PC-3 (cell line): ENCODE measurements at regions of chr13 and their contacts with region 1.

Region 1: DNA sequence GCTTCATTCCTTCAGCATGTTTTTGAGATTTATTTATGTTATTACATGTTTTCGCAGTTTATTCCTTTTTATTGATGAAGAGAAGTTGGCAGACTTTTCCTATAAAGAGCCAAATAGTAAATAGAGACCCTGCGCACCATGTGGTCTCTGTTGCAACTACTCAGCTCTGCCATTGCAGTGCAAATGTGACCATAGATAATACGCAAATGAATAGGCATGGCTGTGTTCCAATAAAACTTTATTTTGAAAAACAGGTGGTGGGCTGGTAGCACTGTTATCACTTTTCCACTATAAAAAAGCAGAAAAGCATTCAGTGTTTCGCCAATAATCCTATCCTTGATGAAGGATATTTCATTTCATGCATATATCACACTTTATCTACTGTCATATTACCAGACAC is 95.0 kb downstream of the DNAJC3 start:
- DNase-seq: no peak
- ATAC-seq: no peak
- H3K4me3 ChIP-seq: no peak overlapping the region
- H3K27ac ChIP-seq: no peak overlapping the region
- H3K4me1 ChIP-seq: no peaks in the 10 kb centered on the region; the same call in 1 of the 2 replicates
- H3K27me3 ChIP-seq: no peaks in the 10 kb centered on the region
- CTCF ChIP-seq: no peak

Region 2: DNA sequence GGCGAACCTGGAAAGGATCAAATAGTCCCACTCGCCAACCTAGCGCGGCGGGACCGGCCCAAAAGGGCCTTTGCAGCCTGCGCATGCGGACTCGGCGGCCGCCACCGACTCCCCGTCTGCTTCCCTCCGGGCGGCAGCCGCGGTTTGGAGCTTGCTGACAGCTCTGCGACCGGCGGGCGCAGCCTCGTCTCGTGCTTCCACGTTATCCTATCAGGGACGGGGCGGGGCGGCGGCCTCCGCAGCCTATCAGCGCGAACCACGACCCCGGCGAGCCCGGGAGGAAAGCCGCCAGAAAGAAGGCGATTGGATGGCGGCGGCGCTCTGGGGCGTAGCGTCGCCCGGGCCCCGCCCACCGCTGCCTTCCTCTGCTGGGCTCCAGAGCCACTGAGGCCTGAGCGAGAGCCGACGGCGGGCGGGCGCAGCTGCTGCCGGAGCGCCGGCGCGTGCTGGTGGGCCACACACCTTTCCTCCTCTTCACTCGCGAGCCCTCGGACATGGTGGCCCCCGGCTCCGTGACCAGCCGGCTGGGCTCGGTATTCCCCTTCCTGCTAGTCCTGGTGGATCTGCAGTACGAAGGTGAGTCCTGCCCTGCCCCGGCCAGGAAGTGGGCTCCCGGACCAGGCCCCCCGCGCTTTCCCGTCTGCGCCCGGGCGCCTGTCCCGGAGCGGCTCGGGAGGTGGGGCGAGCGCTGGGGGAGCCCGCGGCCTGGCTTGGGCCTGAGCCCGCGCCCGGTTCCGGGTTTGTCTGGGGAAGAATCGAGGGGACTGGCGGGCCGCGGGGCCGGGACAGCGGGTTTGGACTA is 94.9 kb before region 1 on chr13 and contains the start of gene DNAJC3:
- CTCF ChIA-PET with region 1: no interaction called
- POLR2A ChIA-PET with region 1: no interaction called
- intact Hi-C with region 1: loop called (anchors 10 kb)
- DNase-seq: peak; percentile 94
- ATAC-seq: peak; percentile 93
- H3K4me3 ChIP-seq: peak within 1 kb of the TSS; percentile 98
- H3K27ac ChIP-seq: peak within 1 kb of the TSS; percentile 71
- H3K4me1 ChIP-seq: peaks cover 35% of the 10 kb centered on the region
- H3K27me3 ChIP-seq: no peaks in the 10 kb centered on the region
- CTCF ChIP-seq: no peak
- total RNA-seq, gene DNAJC3: 17.8 and 20.5 TPM in 2 replicates

Region 3: DNA sequence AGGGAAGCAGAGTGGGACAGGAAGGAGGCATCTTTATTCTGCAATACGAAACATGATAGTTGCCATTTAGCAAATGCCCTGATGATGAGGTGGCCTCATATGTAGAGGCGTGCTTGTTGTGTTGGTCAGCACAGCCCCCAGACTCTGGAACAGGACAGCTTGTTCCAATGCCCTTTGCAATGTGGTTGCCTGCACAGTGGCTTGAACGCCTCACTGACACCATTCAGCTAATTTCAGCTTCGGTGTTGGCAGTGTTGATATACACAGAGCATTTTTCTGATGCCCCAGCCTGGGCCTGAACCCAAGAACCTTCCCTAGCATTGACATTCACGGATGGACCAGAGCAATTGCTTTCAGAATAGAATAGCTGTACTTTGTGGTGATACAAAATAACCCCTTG is 451.3 kb after region 1 on chr13:
- CTCF ChIA-PET with region 1: no interaction called
- POLR2A ChIA-PET with region 1: no interaction called
- intact Hi-C with region 1: no loop called
- DNase-seq: no peak
- ATAC-seq: no peak
- H3K4me3 ChIP-seq: no peak overlapping the region
- H3K27ac ChIP-seq: no peak overlapping the region
- H3K4me1 ChIP-seq: no peaks in the 10 kb centered on the region
- H3K27me3 ChIP-seq: no peaks in the 10 kb centered on the region
- CTCF ChIP-seq: no peak